ENCODE measurements at regions of chr19 and their contacts with region 1.

Region 1: DNA sequence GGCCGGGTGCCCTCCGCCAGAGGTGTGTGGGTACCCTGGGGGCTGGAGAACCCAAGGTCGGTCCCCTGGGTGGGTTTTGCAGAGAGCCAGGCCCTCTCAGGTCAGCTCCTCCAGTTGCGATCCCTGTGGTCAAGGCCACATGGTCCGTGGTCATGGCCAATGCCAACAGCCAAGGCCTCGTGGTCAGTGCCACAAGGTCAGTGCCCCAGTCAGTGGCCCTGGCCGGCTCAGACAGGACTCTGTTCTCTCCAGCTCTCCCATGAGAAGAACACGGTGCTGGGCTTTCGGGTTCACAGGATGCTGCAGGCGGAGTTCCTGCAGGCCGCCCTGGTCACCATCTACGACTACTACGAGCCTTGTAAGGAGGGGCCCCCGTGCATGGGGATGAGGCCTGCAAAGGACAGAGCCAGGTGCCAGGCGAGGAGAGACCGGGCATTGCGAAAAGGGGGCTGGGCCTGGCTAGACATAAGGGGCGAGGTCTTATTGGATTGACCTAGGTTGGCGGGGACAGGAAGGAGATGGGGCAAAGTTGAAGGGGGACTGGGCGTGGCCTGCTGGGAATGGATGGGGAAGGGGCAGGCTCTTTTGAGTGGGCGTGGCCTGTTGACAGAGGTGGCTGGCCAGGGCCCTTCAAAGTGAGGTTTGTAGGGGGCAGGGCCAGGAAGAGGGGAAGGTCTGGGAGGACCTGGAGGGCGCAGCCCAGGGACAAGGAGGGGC is 15.2 kb upstream of the SHFL start:
- DNase-seq: peak; percentile 91 to 97 (median 94)
- ATAC-seq: peak; percentile 81 to 90 (median 83)
- H3K4me3 ChIP-seq: peak overlapping the region; percentile 42 to 68 (median 55)
- H3K27ac ChIP-seq: peak overlapping the region; percentile 57 to 86 (median 58)
- H3K4me1 ChIP-seq: peaks cover 0 to 41% (median 7%) of the 10 kb centered on the region in 4 donors
- H3K27me3 ChIP-seq: no peaks in the 10 kb centered on the region
- CTCF ChIP-seq: no peak
- POLR2A ChIP-seq: no peak

Region 2: DNA sequence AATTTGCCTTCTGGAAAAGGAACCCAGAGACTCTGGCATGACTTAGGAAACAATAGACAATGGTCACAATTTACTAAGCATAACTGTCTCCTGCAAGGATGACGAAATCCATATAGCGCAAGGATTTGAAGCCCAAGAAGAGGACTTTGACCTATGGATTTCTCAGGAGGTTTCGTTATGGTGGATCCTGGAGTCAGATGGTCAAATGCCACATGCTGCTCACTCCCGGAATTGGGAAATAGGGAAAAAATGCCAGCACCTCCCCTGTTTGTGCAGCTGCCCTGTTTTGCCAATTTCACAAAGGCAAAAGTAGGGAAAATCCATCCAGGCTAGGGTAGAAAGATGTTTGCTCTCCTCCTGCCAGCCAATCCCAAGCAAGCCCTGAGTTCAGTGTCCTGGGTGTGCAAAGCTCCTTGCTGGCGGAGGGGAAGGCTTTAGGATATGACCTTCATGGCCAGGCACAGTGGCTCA is 34.3 kb before region 1 on chr19:
- intact Hi-C with region 1: loop called in 1 of 2 experiments (anchors 2 kb)
- DNase-seq: peak; percentile 78 to 95 (median 91)
- ATAC-seq: peak; percentile 82 to 88 (median 84)
- H3K4me3 ChIP-seq: no peak overlapping the region
- H3K27ac ChIP-seq: peak overlapping the region in 2 of 3 donors; percentile 64 to 82
- H3K4me1 ChIP-seq: peaks cover 0 to 48% (median 15%) of the 10 kb centered on the region in 4 donors
- H3K27me3 ChIP-seq: no peaks in the 10 kb centered on the region
- CTCF ChIP-seq: no peak
- POLR2A ChIP-seq: no peak

Measured in right lobe of liver (tissue), 6 donors.